Common myeloid progenitor, CD34-positive (primary cell): ENCODE measurements at regions of chr20 and their contacts with region 1.

Region 1: DNA sequence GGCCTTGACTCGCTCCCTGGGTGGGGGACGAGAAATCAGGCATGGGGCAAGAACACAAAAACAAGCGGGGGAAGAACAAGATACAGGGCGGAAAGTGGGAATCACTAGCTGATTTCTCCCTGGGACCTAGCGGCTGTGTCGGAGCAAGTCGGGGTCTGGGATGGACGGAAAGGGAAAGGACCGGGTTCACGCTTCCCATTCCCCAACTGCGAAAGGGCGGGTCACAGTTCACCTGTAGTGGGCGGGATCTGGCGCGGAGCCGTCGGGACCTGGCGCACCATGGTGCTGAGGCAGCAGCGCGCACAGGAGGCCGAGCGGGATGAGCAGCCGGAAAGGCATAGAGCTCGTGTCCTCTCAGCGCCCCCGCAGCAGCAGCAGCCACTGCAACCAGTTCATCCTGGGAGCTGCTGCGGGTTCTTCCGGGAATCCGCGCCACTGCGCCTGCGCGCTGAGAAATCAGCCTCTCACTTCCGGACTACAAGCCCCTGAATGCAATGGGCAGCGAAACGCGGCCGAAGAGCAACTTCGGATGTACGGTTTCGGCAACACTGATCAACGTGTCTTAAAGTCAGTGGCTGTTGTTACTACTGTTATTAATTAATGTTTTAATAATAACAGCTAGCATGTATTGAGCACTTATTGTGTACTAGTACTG is at the start of gene EDEM2:
- DNase-seq: peak; percentile 93 to 96 (median 94)
- H3K4me3 ChIP-seq: peak within 1 kb of the TSS; percentile 82 to 100 (median 99)
- H3K27ac ChIP-seq: peak within 1 kb of the TSS; percentile 55 to 78
- H3K4me1 ChIP-seq: peaks cover 11 to 45% (median 39%) of the 10 kb centered on the region in 4 experiments
- H3K27me3 ChIP-seq: no peaks in the 10 kb centered on the region

Region 2: DNA sequence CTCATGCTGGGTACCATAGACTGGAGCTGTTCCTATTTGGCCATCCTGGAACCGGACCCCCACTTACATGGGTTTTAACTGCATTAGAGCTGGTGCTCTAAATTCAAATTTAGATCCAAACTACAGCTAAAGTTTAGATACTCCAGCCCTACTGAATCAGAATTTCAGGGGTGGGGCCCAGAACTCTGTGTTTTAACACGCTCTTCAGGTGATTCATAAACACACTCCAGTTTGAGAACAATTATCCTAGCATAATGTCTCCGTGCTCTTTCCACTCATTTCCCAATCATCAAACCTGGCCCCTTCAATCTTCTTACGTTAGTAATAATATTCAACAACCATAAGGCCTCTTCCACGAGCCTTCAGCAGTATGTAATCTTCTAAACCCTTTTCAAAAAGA is 69.7 kb before region 1 on chr20:
- CTCF ChIA-PET with region 1: no interaction called
- POLR2A ChIA-PET with region 1: no interaction called
- DNase-seq: no peak
- H3K4me3 ChIP-seq: no peak overlapping the region
- H3K27ac ChIP-seq: no peak overlapping the region
- H3K4me1 ChIP-seq: no peaks in the 10 kb centered on the region
- H3K27me3 ChIP-seq: no peaks in the 10 kb centered on the region

Region 3: DNA sequence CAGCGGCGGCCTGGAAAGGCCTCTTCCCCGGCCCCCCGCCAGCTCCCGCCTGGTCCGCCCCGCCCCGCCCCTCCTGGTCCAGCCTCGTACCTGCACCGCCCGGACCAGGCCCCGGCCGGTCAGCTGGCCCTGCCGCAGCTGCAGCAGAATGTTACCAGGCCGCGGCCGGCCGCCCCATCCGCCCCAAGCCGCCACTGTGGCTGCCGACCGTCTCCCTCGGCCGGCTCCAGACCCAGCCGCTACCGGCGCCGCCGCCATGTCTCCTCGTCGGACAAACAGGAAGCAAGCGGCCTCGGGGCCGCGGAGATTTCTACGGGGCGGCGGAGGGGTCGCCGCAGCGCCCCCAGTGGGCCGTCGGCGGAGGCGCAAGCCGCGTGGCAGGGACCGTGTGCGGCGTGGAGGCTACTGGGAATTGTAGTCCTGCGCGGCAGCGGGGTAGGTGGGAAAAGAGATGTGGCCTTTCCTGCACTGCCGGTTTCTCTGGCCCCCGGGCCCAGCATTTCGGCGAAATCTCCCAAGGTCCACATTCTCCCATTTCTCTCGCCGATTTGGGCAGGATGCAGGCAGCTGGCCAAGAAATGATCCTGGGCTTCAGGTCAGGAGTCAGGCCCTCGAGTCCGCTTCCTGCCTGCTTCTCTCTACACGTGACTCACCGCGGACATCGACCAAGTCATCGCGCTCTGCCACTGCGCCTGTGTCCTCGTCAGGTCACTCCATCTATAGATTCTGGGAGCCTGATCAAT is 54.4 kb before region 1 on chr20 and contains the start of gene TRPC4AP:
- CTCF ChIA-PET with region 1: interaction called, 20 read pairs
- POLR2A ChIA-PET with region 1: no interaction called
- DNase-seq: peak; percentile 89 to 93 (median 93)
- H3K4me3 ChIP-seq: peak within 1 kb of the TSS; percentile 79 to 99 (median 94)
- H3K27ac ChIP-seq: peak within 1 kb of the TSS; percentile 80 to 92
- H3K4me1 ChIP-seq: peaks cover 13 to 35% (median 23%) of the 10 kb centered on the region in 4 experiments
- H3K27me3 ChIP-seq: no peaks in the 10 kb centered on the region

Region 4: GRCh38 chr20:35207950-35208611 is 61.0 kb after region 1 on chr20:
- CTCF ChIA-PET with region 1: interaction called, 41 read pairs
- POLR2A ChIA-PET with region 1: no interaction called
- DNase-seq: peak; percentile 76 to 91 (median 85)
- H3K4me3 ChIP-seq: no peak overlapping the region
- H3K27ac ChIP-seq: no peak overlapping the region
- H3K4me1 ChIP-seq: no peaks in the 10 kb centered on the region
- H3K27me3 ChIP-seq: no peaks in the 10 kb centered on the region

Region 5: DNA sequence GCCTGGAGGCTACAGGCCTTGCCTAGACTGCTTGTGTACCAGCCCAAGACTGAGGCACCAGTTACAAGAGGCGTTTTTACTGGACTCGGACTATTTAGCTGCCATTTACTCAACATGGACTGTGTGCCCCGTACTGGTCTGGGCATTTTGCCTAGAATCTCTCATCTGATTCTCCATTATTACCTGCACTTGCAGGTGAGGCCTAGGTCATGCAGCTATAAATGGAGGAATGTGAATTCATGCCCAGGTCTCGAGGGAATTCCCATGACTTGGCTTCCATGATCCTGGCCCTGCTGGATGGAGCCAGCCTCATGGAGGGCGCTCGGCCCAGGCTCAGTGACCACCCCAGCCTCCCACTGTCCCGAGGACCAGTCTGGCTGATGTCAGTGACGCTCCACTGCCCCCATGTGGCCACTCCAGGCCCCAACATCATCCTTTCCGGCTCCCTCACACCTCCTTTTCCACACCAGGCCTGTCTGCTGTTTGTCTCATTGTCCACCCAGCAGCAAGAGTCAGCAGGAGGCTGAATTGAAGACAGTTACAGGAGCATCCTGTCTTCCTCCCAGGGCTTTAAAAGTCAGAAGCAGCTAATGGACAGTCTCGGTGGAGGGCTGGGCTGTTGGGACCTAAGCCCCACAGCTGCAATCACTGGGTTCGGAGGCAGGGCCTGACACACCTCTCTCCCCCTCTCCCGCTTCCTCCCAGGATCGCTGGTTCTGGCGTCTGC is 122.2 kb after region 1 on chr20:
- CTCF ChIA-PET with region 1: interaction called, 35 read pairs
- POLR2A ChIA-PET with region 1: interaction called, 3 read pairs
- DNase-seq: peak; percentile 24 to 51 (median 30)
- H3K4me3 ChIP-seq: no peak overlapping the region
- H3K27ac ChIP-seq: no peak overlapping the region
- H3K4me1 ChIP-seq: peaks cover 0 to 3% (median 0%) of the 10 kb centered on the region in 4 experiments
- H3K27me3 ChIP-seq: no peaks in the 10 kb centered on the region